Activated CD4-positive, alpha-beta T cell treated with anti-CD3 and anti-CD28 coated beads for 36 hours (primary cell): ENCODE measurements at regions of chr12 and their contacts with region 1.

Region 1: DNA sequence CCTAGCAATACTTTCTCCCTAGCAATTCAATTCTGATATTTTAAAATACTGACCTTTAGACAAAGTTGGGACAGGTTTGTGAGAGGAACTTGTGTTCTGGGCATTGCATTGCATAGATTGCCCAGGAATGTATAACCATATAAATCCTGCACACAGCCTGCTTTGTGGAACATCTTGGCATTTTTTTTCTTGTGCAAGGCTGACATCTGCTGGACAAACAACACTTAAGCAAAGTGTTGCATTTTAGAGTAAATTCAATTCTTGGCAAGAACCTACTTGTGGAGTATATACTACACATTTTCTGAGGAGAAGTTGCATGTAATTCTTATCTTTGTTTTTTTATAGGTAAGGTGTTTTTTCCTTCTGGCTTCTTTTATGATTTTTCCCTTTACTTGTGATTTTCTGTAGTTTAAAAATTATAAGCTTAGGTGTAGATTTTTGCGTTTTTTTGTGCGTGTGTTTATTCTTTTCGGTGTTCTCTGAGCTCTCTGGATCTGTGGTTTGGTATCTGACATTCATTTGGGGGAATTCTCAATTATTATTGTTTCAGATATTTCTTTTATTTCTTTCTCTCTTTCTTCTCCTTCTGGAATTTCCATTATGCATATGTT is 26.4 kb downstream of the TESPA1 start:
- DNase-seq: peak; percentile 65
- ATAC-seq: peak; percentile 20
- H3K4me3 Mint-ChIP-seq: no peak overlapping the region
- H3K27ac Mint-ChIP-seq: peak overlapping the region; percentile 80
- H3K4me1 Mint-ChIP-seq: peaks cover 88% of the 10 kb centered on the region
- H3K27me3 Mint-ChIP-seq: no peaks in the 10 kb centered on the region

Region 2: GRCh38 chr12:54142114-54142475 is 816.1 kb before region 1 on chr12:
- CTCF ChIA-PET with region 1: no interaction called
- POLR2A ChIA-PET with region 1: no interaction called
- intact Hi-C with region 1: no loop called
- DNase-seq: no peak
- ATAC-seq: no peak
- H3K4me3 Mint-ChIP-seq: no peak overlapping the region
- H3K27ac Mint-ChIP-seq: no peak overlapping the region
- H3K4me1 Mint-ChIP-seq: no peaks in the 10 kb centered on the region
- H3K27me3 Mint-ChIP-seq: peaks cover 43% of the 10 kb centered on the region

Region 3: GRCh38 chr12:54701940-54702592 is 256.1 kb before region 1 on chr12:
- CTCF ChIA-PET with region 1: interaction called, 11 read pairs
- POLR2A ChIA-PET with region 1: no interaction called
- intact Hi-C with region 1: no loop called
- DNase-seq: no peak
- ATAC-seq: peak; percentile 58
- H3K4me3 Mint-ChIP-seq: no peak overlapping the region
- H3K27ac Mint-ChIP-seq: no peak overlapping the region
- H3K4me1 Mint-ChIP-seq: no peaks in the 10 kb centered on the region
- H3K27me3 Mint-ChIP-seq: no peaks in the 10 kb centered on the region

Region 4: DNA sequence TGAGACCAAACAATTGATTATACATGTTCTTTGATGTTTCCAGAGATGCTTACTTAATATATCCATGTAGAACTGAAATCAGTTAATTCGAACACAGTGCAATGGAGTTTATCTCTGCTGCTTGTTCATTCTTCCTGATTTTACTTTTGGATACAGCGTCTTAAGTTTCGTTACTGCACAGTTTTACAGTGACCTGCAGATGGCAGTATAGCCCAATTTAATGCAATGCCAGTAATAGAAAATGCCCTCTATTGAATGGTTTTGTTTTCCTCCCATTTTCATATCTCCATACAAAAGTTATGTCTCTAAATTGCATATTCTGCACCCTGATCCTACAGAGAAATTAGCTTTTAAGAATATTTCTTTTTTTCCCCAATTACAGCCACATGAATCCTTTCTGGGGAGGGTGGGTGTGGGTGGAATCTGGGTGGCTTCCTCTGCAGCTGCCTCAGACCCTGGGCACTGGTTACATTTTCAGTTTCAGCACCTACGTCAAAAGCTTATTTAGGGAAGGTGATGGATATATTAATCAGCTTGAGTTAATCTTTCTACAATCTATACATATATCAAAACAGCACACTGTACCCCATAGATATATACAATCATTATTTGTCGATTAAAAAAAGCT is 208.8 kb before region 1 on chr12:
- CTCF ChIA-PET with region 1: interaction called, 112 read pairs
- POLR2A ChIA-PET with region 1: no interaction called
- intact Hi-C with region 1: loop called (anchors 1 kb)
- DNase-seq: peak; percentile 46
- ATAC-seq: peak; percentile 71
- H3K4me3 Mint-ChIP-seq: no peak overlapping the region
- H3K27ac Mint-ChIP-seq: no peak overlapping the region
- H3K4me1 Mint-ChIP-seq: peaks cover 18% of the 10 kb centered on the region
- H3K27me3 Mint-ChIP-seq: peaks cover 2% of the 10 kb centered on the region

Region 5: DNA sequence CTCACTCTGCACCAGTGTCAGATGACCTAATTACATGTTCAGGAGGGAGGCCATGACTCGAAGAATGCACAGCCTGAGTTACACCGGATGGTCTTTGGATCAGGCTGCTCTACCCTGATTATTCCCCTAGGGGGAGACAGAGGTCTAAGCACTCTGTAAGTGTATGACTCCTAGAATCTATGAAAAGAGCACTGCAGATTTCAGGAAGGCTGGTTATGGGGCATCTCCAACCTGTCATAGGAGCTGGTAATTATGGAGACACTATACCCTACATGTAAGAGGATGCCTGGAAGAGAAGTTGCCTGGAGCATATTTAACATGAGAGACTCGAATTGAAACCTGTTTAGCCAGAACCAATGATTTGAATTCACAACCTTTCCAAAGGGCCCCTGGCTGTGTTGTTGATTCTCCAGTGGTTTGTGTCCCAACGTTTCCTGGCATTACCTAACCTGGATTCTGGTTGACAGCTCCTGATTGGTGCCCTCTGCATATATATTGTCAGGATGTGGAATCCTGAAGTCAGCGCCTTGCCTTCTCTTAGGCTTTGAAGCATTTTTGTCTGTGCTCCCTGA is 104.1 kb before region 1 on chr12 and contains the start of gene MUCL1:
- CTCF ChIA-PET with region 1: interaction called, 48 read pairs
- POLR2A ChIA-PET with region 1: no interaction called
- intact Hi-C with region 1: loop called (anchors 1 kb)
- DNase-seq: peak; percentile 82
- ATAC-seq: peak; percentile 95
- H3K4me3 Mint-ChIP-seq: no peak within 1 kb of the TSS
- H3K27ac Mint-ChIP-seq: no peak within 1 kb of the TSS
- H3K4me1 Mint-ChIP-seq: peaks cover 18% of the 10 kb centered on the region
- H3K27me3 Mint-ChIP-seq: no peaks in the 10 kb centered on the region
- total RNA-seq, gene MUCL1: not detected

Region 6: DNA sequence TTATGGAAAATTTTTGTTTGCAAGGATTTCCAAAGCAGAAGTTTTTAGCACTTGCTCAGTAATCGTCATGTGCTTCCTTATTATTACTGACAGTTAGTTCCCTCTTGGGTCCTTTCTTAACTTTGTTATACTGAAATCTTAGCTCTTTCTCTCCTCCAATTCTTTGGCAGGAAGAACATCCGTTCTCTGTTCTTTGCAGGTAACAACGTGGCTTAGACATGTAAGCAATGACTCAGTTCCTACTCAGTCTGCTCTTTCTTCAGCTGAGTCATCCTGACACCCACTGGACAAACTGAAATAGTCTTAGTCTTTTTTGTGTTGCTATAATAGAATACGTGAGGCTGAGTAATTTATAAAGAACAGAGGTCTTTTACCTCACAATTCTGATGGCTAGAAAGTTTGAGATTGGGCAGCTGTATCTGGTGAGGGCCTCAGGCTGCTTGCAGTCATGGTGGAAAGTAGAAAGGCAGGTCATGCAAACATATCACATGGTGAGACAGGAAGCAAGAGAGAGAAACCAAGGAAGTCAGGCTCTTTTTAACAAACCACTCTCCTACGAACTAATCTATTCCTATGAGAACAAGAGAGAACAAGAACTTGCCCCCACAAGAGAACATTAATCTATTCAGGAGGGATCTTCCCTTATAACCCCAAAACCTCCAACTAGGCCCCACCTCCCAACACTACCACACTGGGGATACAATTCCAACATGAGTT is 22.8 kb before region 1 on chr12:
- CTCF ChIA-PET with region 1: interaction called, 37 read pairs
- POLR2A ChIA-PET with region 1: interaction called, 12 read pairs
- intact Hi-C with region 1: loop called (anchors 1 kb)
- DNase-seq: peak; percentile 62
- ATAC-seq: peak; percentile 92
- H3K4me3 Mint-ChIP-seq: peak overlapping the region; percentile 45
- H3K27ac Mint-ChIP-seq: peak overlapping the region; percentile 96
- H3K4me1 Mint-ChIP-seq: peaks cover 69% of the 10 kb centered on the region
- H3K27me3 Mint-ChIP-seq: no peaks in the 10 kb centered on the region

Region 7: DNA sequence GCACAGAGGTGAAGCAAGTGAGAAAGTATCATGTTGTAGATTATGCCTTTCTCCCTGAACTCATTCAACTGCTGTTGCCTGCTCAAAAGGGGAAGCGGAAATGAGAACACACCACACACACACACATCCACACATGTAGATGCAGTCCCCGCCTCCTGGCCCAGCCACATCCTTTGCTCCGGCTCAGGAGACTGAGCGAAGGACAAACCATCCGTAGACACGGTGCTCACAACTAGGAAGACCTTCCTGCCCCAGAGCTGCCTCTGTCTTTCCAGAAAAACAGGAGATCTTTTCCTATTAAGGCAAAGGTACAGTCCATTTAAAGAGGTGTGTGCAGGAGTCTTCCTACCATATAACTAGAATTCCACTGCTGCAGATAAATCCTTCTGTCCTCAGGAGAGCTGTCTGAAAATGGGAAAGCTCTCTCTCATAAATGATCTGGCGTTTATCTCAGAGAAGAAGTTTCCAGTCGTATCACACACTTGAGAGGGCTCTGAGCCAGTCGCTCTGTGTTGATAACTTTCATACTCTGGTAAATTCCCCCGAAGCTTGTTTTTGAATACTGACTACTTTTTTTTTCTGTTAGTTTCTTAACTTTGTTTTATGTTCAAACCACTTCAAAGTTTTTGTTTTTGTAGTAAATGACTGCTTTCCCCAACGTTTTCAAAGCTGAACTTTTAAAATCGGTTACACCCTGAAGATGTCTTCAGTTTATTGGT is 26.7 kb after region 1 on chr12 and contains the start of gene TESPA1:
- CTCF ChIA-PET with region 1: interaction called, 123 read pairs
- POLR2A ChIA-PET with region 1: interaction called, 7 read pairs
- intact Hi-C with region 1: loop called in 1 of 2 experiments (anchors 2 kb)
- DNase-seq: peak; percentile 92
- ATAC-seq: peak; percentile 87
- H3K4me3 Mint-ChIP-seq: peak within 1 kb of the TSS; percentile 78
- H3K27ac Mint-ChIP-seq: peak within 1 kb of the TSS; percentile 95
- H3K4me1 Mint-ChIP-seq: peaks cover 64% of the 10 kb centered on the region
- H3K27me3 Mint-ChIP-seq: no peaks in the 10 kb centered on the region
- total RNA-seq, gene TESPA1: 81.0 to 107 TPM

Region 8: GRCh38 chr12:56688846-56689109 is 1730.6 kb after region 1 on chr12:
- CTCF ChIA-PET with region 1: no interaction called
- POLR2A ChIA-PET with region 1: no interaction called
- intact Hi-C with region 1: no loop called
- DNase-seq: no peak
- ATAC-seq: no peak
- H3K4me3 Mint-ChIP-seq: peak overlapping the region; percentile 99
- H3K27ac Mint-ChIP-seq: peak overlapping the region; percentile 100
- H3K4me1 Mint-ChIP-seq: peaks cover 11% of the 10 kb centered on the region
- H3K27me3 Mint-ChIP-seq: no peaks in the 10 kb centered on the region